ENCODE measurements at regions of chr3 and their contacts with region 1.

Region 1: DNA sequence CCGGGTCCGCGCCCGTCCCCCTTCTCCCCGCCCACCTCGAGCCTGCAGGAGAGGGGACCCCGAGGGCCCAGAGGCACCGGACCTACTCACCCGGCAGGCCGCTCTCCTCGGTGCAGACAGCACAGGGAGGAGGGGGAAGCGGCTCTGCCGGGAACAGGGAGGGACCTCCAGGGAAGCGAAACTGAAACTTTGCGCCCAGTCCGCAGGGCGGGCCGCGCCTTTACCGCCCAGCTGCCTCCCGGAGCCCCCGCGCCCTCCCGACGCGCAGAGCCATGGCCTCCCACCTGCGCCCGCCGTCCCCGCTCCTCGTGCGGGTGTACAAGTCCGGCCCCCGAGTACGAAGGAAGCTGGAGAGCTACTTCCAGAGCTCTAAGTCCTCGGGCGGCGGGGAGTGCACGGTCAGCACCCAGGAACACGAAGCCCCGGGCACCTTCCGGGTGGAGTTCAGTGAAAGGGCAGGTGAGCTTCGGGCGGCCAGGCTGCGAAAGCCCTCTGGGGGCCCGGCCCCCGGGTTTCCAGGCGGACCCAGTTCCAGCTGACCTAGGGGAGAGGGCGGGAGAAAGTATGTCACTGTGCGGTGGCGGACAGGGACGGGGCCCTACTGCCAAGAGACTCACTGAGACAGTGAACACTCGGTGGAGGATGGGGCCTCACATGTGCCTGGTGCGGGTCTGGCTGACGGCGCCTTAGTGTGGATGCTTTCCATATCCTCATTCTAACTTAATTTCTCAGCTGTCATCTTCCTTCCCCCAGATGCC is at the starts of genes DTX3L and PARP9:
- DNase-seq: peak; percentile 50 to 82 (median 77)
- ATAC-seq: peak; percentile 95
- H3K4me3 ChIP-seq: peak within 1 kb of the TSS; percentile 75
- H3K4me3 Mint-ChIP-seq: peak within 1 kb of the TSS; percentile 88 to 100 (median 98)
- H3K27ac ChIP-seq: peak within 1 kb of the TSS; percentile 98
- H3K27ac Mint-ChIP-seq: peak within 1 kb of the TSS; percentile 97 to 99 (median 98)
- H3K4me1 ChIP-seq: peaks cover 34 to 45% of the 10 kb centered on the region in 2 donors
- H3K4me1 Mint-ChIP-seq: peaks cover 58 to 91% (median 79%) of the 10 kb centered on the region in 7 donors
- H3K27me3 ChIP-seq: no peaks in the 10 kb centered on the region
- H3K27me3 Mint-ChIP-seq: no peaks in the 10 kb centered on the region
- total RNA-seq, gene DTX3L: 28.6 to 164 (median 35.8) TPM
- total RNA-seq, gene PARP9: 17.6 to 165 (median 24.4) TPM

Region 2: DNA sequence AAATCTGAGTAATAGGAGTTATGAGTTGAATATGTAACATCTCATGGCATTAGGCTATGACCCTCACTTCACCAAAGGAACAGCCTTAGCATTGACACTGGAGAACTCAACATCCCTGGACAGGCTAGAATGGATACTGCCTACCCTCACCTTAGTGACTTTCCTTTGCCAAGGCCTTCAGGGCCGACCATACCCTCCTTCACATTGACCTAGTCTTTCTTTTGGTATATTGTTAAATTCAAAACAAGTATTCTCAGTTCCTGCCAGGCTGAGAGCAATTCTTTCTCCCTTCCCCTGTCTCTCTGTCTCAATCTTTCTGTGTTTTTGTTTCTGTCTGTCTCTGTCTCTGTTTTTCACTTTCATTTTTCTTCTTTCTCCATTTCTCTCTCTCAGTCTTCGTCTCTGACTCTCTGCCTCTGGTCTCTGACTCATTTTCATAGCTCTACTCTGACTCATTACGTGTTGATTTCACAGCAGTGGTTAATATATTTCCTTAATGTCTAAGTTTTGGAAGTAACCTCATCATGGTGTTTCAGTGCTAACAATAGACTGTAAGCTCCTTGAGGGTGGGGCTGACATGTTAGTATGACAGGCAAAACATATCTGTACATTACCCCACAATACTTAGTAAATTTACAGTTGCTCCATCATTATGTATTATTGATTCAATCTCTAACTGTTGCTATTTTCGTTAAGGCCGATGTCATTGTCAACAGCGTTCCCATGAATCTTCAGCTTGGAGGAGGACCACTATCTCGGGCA is 45.6 kb after region 1 on chr3:
- CTCF ChIA-PET with region 1: no interaction called
- POLR2A ChIA-PET with region 1: no interaction called
- intact Hi-C with region 1: loop called (anchors 1 to 5 kb)
- DNase-seq: peak in 1 of 9 donors; percentile 30
- ATAC-seq: peak; percentile 73
- H3K4me3 ChIP-seq: no peak overlapping the region
- H3K4me3 Mint-ChIP-seq: peak overlapping the region in 2 of 10 donors; percentile 72 to 74
- H3K27ac ChIP-seq: no peak overlapping the region
- H3K27ac Mint-ChIP-seq: peak overlapping the region in 7 of 9 donors; percentile 39 to 96 (median 89)
- H3K4me1 ChIP-seq: no peaks in the 10 kb centered on the region
- H3K4me1 Mint-ChIP-seq: peaks cover 5 to 33% (median 8%) of the 10 kb centered on the region in 7 donors
- H3K27me3 ChIP-seq: no peaks in the 10 kb centered on the region
- H3K27me3 Mint-ChIP-seq: no peaks in the 10 kb centered on the region

Region 3: GRCh38 chr3:122642935-122643334 is 78.6 kb after region 1 on chr3:
- CTCF ChIA-PET with region 1: no interaction called
- POLR2A ChIA-PET with region 1: interaction called, 4 read pairs
- intact Hi-C with region 1: loop called in 1 of 2 experiments (anchors 1 kb)
- DNase-seq: no peak
- ATAC-seq: no peak
- H3K4me3 ChIP-seq: no peak overlapping the region
- H3K4me3 Mint-ChIP-seq: peak overlapping the region in 1 of 10 donors; percentile 68
- H3K27ac ChIP-seq: no peak overlapping the region
- H3K27ac Mint-ChIP-seq: peak overlapping the region in 2 of 9 donors; percentile 23 to 65
- H3K4me1 ChIP-seq: no peaks in the 10 kb centered on the region
- H3K4me1 Mint-ChIP-seq: peaks cover 2 to 47% (median 8%) of the 10 kb centered on the region in 7 donors
- H3K27me3 ChIP-seq: no peaks in the 10 kb centered on the region
- H3K27me3 Mint-ChIP-seq: peaks cover 0 to 14% (median 0%) of the 10 kb centered on the region in 5 donors

Region 4: GRCh38 chr3:122793568-122794416 is 229.5 kb after region 1 on chr3 and contains the start of gene HSPBAP1:
- CTCF ChIA-PET with region 1: no interaction called
- POLR2A ChIA-PET with region 1: interaction called, 3 read pairs
- intact Hi-C with region 1: loop called (anchors 2 to 5 kb)
- DNase-seq: peak; percentile 71 to 90 (median 86)
- ATAC-seq: peak; percentile 77
- H3K4me3 ChIP-seq: peak within 1 kb of the TSS; percentile 83
- H3K4me3 Mint-ChIP-seq: peak within 1 kb of the TSS in 5 of 10 donors; percentile 91 to 97 (median 95)
- H3K27ac ChIP-seq: peak within 1 kb of the TSS; percentile 82
- H3K27ac Mint-ChIP-seq: peak within 1 kb of the TSS in 6 of 9 donors; percentile 79 to 99 (median 96)
- H3K4me1 ChIP-seq: peaks cover 22 to 34% of the 10 kb centered on the region in 2 donors
- H3K4me1 Mint-ChIP-seq: peaks cover 20 to 29% (median 27%) of the 10 kb centered on the region in 7 donors
- H3K27me3 ChIP-seq: no peaks in the 10 kb centered on the region
- H3K27me3 Mint-ChIP-seq: no peaks in the 10 kb centered on the region
- total RNA-seq, gene HSPBAP1: 9.0 to 31.5 (median 23.3) TPM

Region 5: DNA sequence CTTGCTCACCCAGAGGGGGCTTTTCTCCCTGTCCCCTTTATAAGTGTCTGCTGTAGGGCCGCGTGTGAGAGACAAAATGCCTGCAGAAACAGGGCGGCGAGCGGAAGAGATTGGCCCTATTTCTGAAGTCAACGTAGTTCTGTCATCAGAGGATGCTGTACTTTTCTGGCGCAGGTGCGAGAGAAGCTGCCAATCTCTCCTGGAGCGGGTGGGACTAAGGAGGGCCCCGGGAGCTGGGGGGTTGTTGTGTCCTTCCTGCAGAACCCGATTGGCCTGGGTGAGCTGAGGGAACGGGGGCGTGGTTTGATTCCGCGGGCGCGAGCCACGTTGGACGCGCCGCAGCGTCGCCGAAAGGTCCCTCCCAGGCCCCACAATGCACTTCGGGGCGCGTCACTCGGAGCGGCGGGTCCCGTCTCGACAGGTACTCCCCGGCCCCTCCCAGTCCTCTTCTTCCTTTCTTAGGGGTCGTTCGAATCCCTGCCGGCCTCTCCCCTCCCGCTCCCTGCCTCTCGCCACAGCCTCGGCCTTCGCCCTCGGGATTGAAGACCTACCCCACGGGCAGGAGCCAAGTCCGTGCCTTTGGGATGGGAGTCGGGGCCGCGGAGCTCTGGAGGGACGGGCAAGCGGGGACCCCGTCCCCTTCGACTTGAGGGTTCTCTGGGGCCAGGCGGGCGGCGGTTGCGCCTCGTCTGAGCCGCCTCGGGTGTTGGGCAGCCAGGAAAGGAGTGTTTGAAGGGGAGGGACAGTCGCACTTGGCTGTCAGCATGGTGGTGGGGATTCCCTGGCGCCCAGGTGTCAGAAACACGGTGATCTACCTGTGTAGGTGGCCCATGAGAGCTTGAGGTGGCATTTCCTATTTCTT is 637.5 kb after region 1 on chr3 and contains the start of gene SEC22A:
- CTCF ChIA-PET with region 1: no interaction called
- POLR2A ChIA-PET with region 1: no interaction called
- intact Hi-C with region 1: loop called (anchors 1 to 5 kb)
- DNase-seq: peak; percentile 89 to 99 (median 97)
- ATAC-seq: peak; percentile 97
- H3K4me3 ChIP-seq: peak within 1 kb of the TSS; percentile 90
- H3K4me3 Mint-ChIP-seq: peak within 1 kb of the TSS; percentile 82 to 98 (median 92)
- H3K27ac ChIP-seq: peak within 1 kb of the TSS; percentile 99
- H3K27ac Mint-ChIP-seq: peak within 1 kb of the TSS; percentile 97 to 100 (median 99)
- H3K4me1 ChIP-seq: peaks cover 12% of the 10 kb centered on the region in 2 donors
- H3K4me1 Mint-ChIP-seq: peaks cover 13 to 41% (median 31%) of the 10 kb centered on the region in 7 donors
- H3K27me3 ChIP-seq: no peaks in the 10 kb centered on the region
- H3K27me3 Mint-ChIP-seq: peaks cover 0 to 9% (median 2%) of the 10 kb centered on the region in 5 donors
- total RNA-seq, gene SEC22A: 15.0 to 20.1 (median 17.1) TPM

Region 6: GRCh38 chr3:123258811-123259420 is 694.6 kb after region 1 on chr3:
- CTCF ChIA-PET with region 1: no interaction called
- POLR2A ChIA-PET with region 1: no interaction called
- intact Hi-C with region 1: loop called in 1 of 2 experiments (anchors 1 kb)
- DNase-seq: peak in 5 of 9 donors; percentile 13 to 32 (median 21)
- ATAC-seq: peak; percentile 78
- H3K4me3 ChIP-seq: no peak overlapping the region
- H3K4me3 Mint-ChIP-seq: no peak overlapping the region
- H3K27ac ChIP-seq: no peak overlapping the region
- H3K27ac Mint-ChIP-seq: peak overlapping the region in 1 of 9 donors; percentile 74
- H3K4me1 ChIP-seq: no peaks in the 10 kb centered on the region
- H3K4me1 Mint-ChIP-seq: peaks cover 0 to 11% (median 0%) of the 10 kb centered on the region in 7 donors
- H3K27me3 ChIP-seq: no peaks in the 10 kb centered on the region
- H3K27me3 Mint-ChIP-seq: no peaks in the 10 kb centered on the region